ENCODE measurements at regions of chr1 and their contacts with region 1.

Region 1: DNA sequence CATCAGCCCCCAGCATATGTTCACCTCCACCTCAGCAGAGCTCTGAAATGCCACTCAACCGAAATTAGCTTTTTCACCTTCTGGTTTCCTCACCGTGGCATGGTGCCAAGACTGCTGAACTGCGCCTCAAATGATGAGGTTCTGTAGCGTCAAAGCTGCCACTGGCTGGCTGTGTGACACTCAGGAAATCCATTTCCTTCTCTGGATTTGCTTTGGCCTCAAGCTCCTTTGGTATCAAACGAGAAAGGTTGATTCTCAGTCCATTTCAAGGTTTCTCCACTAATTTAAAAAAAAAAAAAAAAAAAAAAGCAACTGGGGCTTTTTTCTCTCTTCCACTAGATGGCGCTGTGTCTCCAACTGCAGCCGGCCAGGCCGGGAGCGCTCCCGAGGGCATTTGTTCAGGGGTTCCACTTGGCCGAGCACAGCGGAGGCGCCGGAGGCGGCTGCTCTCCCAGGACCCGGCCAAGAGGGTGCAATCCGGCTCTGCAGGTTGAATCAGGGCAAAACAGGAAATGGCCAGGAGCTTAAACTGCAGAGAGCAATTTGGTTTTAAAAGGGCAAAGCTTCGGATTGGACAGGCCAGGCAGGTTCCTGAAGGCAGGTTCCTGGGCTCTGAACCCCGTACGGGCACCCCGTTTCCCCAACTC is 26.5 kb upstream of the PLA2G2C start:
- DNase-seq: peak; percentile 67
- ATAC-seq: no peak
- H3K4me3 Mint-ChIP-seq: no peak overlapping the region
- H3K27ac Mint-ChIP-seq: no peak overlapping the region
- H3K4me1 Mint-ChIP-seq: peaks cover 4% of the 10 kb centered on the region
- H3K27me3 Mint-ChIP-seq: peaks cover 57% of the 10 kb centered on the region

Region 2: DNA sequence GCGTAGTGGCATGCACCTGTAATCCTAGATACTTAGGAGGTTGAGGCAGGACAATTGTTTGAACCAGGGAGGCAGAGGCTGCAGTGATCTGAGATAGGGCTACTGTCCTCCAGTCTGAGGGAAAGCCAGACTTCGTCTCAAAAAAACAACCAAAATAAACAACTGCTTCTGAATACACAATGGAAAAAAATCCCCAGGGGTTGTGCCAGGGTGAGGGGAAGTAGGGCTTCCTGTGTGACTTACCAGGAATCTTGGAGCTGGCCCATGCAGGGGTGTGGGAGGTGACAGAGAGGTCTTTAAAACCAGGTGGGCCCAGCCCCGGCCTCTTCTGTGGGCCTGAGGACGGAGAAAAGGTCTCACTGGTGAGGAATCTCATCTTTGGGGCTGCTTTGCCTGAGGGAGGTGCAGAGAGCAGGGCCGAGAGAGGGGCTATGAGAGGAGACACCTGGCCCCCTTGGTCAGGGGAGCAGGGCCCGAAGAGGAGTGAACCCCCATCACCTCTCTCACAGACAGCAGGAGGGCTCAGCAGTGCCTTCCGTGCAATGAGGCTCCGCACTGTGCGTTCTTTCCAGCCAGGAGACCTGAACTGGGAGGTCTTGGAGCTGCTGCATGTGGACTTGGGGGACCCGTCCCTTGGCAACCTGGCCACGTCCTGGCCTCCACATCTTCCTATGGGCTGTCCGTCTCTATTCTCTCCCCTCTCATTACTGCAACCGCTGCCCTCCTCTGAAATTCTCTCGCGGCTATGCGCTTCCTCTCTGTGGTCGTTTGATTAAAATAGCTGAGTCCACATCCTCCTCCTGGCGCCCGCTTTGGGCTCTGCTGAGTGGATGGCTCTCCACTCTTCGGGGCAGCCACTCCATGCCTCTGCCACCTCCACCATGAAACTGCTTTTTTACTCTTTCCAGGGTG is 132.1 kb before region 1 on chr1:
- CTCF ChIA-PET with region 1: no interaction called
- DNase-seq: peak; percentile 64
- ATAC-seq: peak; percentile 84
- H3K4me3 Mint-ChIP-seq: no peak overlapping the region
- H3K27ac Mint-ChIP-seq: no peak overlapping the region
- H3K4me1 Mint-ChIP-seq: peaks cover 18% of the 10 kb centered on the region
- H3K27me3 Mint-ChIP-seq: peaks cover 76% of the 10 kb centered on the region

Region 3: DNA sequence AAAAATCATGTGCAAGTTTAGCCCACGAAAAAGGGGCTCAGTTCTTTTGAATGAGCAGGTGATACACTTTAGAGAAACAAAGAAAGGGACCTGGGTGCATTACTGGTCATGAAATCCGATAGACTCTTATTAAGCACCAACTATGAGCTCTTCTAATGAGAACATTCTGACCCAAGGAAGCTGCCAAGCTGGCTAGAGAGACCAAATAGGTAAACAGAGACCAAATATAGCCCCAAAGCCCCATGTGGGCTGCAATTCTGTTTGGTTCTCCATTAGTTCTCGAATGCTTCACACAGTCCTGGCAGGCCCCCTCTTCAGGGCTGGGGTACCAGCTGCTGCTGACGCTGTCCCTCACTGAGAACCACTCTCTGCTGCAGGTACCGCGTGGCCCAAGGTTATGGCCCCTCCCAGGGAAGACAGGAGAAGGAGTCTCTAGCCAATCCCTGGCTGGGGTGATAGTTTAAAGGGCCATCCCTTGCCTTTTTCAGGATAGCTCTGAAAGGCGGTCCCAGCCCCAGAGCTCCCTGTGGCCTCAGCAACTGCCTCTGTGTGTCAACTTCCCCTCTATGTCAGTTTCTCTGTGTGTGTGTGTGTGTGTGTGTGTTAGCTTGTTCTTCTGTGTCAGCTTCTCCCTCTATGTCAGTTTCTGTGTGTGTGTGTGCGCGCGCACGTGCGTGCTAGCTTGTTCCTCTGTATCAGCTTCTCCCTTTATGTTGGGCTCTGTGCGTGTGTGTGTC is 34.0 kb before region 1 on chr1:
- CTCF ChIA-PET with region 1: interaction called, 10 read pairs
- DNase-seq: no peak
- ATAC-seq: no peak
- H3K4me3 Mint-ChIP-seq: no peak overlapping the region
- H3K27ac Mint-ChIP-seq: no peak overlapping the region
- H3K4me1 Mint-ChIP-seq: peaks cover 3% of the 10 kb centered on the region
- H3K27me3 Mint-ChIP-seq: peaks cover 19% of the 10 kb centered on the region

Region 4: DNA sequence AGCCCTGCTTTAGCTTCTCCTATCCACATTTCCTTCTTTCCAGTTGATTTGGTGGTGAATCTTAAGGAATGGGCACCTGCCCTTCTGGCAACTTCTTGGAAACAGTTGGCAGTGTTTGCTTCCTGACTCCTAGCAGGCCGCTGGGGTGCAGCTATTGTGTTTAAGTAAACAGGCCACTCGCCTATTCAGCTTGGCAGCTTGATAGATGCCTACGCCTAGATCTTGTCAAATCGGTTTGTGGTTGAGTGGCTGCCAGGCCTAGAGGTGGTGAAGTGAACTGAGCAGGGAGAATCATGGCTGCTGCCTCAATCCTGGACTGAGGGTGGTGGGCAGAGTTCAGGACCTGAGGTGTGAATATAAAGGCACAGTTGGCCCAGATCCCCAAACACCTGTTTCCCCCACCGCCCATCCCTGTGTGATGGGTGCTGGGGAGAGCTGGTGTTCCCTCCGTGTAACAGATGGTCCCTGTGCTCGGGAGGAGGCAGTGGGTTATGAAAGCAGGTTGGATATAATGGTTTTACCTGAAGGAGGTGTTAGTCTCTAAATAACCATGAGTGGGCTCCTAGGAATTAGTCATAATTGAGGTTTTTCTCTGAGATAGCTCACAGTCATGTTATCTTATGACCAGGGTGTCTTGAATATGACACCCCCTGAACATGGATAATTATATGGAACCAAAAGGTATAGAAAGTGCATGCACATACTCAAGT is 25.6 kb before region 1 on chr1:
- CTCF ChIA-PET with region 1: interaction called, 18 read pairs
- DNase-seq: peak; percentile 45
- ATAC-seq: no peak
- H3K4me3 Mint-ChIP-seq: peak overlapping the region; percentile 3
- H3K27ac Mint-ChIP-seq: no peak overlapping the region
- H3K4me1 Mint-ChIP-seq: peaks cover 42% of the 10 kb centered on the region
- H3K27me3 Mint-ChIP-seq: peaks cover 42% of the 10 kb centered on the region

Region 5: GRCh38 chr1:20194757-20195461 is 17.9 kb before region 1 on chr1:
- CTCF ChIA-PET with region 1: interaction called, 26 read pairs
- DNase-seq: peak; percentile 77
- ATAC-seq: peak; percentile 64
- H3K4me3 Mint-ChIP-seq: no peak overlapping the region
- H3K27ac Mint-ChIP-seq: no peak overlapping the region
- H3K4me1 Mint-ChIP-seq: no peaks in the 10 kb centered on the region
- H3K27me3 Mint-ChIP-seq: peaks cover 51% of the 10 kb centered on the region

Region 6: GRCh38 chr1:20202171-20202570 is 10.6 kb before region 1 on chr1:
- CTCF ChIA-PET with region 1: interaction called, 13 read pairs
- DNase-seq: no peak
- ATAC-seq: no peak
- H3K4me3 Mint-ChIP-seq: no peak overlapping the region
- H3K27ac Mint-ChIP-seq: no peak overlapping the region
- H3K4me1 Mint-ChIP-seq: no peaks in the 10 kb centered on the region
- H3K27me3 Mint-ChIP-seq: peaks cover 52% of the 10 kb centered on the region

Region 7: GRCh38 chr1:20250341-20250989 is 37.7 kb after region 1 on chr1:
- CTCF ChIA-PET with region 1: interaction called, 13 read pairs
- DNase-seq: peak; percentile 77
- ATAC-seq: peak; percentile 90
- H3K4me3 Mint-ChIP-seq: no peak overlapping the region
- H3K27ac Mint-ChIP-seq: peak overlapping the region; percentile 12
- H3K4me1 Mint-ChIP-seq: peaks cover 24% of the 10 kb centered on the region
- H3K27me3 Mint-ChIP-seq: peaks cover 6% of the 10 kb centered on the region

Region 8: DNA sequence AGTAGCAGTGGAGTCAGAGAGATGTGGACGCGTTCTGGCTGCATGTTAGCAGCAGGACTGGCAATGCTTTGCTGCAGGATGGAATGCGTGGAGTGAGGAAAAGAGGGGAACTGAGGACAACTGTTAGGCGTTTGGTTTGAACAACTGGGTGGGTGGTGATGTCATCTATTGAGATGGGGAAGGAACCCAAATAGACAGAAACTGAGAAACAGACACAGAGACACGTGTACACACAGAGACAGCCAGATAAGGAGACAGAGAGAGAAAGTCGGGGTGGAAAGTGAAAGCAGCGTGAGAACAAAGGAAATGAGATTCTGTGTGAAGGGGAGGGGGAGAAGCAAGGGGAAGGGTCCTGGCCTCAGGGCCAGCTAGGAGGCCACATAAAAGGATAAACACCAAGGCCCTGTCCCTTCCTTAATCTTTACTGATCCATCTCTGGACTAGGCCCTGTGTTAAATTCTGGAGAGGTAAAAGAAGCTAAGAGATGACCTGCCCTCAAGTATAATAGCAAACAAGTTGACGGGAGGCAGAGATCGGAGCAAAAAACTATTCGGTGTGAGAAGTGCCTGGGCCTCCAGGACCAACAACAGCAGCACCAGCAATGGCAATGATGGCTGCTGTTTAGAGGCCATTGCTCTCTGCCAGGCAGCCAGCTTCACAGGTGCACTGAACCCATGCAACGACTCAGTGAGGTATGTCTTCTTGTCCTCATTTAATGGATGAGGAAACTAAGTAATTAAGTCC is 109.4 kb after region 1 on chr1:
- CTCF ChIA-PET with region 1: no interaction called
- DNase-seq: peak; percentile 44
- ATAC-seq: peak; percentile 43
- H3K4me3 Mint-ChIP-seq: peak overlapping the region; percentile 19
- H3K27ac Mint-ChIP-seq: peak overlapping the region; percentile 68
- H3K4me1 Mint-ChIP-seq: peaks cover 21% of the 10 kb centered on the region
- H3K27me3 Mint-ChIP-seq: peaks cover 35% of the 10 kb centered on the region

Region 9: DNA sequence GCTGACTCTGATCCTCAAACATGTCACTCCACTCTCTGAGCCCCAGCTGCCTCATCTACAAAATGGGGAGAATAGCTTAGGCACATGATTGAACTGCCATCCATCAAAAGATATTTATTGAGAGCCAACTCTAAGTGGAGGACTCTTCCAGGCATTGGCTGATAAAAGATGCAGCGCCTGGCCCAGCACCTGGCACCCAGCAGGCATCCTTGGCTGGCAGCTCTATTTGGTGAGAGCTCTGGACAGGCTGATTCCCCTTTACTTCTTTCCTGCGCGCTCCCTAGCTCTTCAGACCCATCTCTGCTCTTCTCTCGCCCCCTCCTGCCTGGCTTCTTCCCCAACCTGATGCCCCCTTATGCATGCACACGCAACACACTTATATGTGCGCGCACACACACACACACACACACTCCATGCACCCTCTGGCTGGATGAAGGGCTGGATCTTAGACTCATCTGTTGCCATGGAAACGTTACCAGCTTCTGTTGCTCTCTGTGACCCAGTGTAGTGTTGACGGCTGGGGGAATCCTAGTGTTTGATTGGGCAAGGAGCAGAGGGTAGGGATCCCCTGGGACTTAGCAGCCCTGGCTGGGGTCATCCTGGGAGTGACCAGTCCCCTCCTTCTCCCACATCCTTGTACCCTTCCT is 127.1 kb after region 1 on chr1:
- CTCF ChIA-PET with region 1: no interaction called
- DNase-seq: no peak
- ATAC-seq: no peak
- H3K4me3 Mint-ChIP-seq: no peak overlapping the region
- H3K27ac Mint-ChIP-seq: no peak overlapping the region
- H3K4me1 Mint-ChIP-seq: no peaks in the 10 kb centered on the region
- H3K27me3 Mint-ChIP-seq: peaks cover 32% of the 10 kb centered on the region

Region 10: GRCh38 chr1:20493839-20494608 is 281.2 kb after region 1 on chr1:
- CTCF ChIA-PET with region 1: interaction called, 43 read pairs
- DNase-seq: peak; percentile 85
- ATAC-seq: peak; percentile 77
- H3K4me3 Mint-ChIP-seq: no peak overlapping the region
- H3K27ac Mint-ChIP-seq: no peak overlapping the region
- H3K4me1 Mint-ChIP-seq: peaks cover 11% of the 10 kb centered on the region
- H3K27me3 Mint-ChIP-seq: peaks cover 20% of the 10 kb centered on the region